Ovary (tissue), 10 donors: ENCODE measurements at regions of chr2 and their contacts with region 1.

Region 1: DNA sequence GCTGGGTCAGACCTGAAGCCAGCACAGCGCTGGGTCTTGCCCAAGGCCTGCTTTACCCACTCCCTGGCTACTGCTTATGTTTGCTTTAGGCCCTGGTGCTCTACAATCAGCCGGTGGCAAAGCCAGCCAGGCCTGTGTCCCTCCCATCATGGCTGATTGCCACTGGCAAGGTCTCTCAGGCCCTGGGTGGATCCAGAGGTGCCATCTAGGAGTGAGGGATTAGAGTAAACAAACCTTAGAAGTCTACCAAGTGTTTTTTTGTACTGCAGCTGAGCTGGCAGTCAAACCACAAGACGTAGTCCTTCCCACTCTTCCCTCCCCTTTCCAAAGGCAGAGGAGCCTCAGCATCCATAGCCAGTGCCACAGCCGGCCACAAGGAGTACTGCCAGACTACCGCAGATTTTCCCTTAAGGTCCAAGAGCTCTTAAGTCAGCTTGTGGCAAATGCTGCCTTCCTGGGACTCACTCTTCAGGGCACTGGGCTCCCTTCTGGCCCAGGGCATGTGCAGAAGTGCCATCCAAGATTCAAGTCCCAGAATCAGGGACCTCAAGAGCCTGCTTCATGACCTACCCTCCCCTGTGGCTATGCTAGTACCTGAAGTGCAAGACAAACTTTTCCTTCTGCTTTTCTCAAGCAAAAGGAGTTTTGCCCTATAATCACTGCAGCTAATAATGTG is 20.0 kb downstream of the IL1RL2 start:
- DNase-seq: no peak
- H3K4me3 ChIP-seq: no peak overlapping the region
- H3K27ac ChIP-seq: no peak overlapping the region
- H3K4me1 ChIP-seq: no peaks in the 10 kb centered on the region
- H3K27me3 ChIP-seq: no peaks in the 10 kb centered on the region
- CTCF ChIP-seq: no peak
- EP300 ChIP-seq: no peak
- POLR2A ChIP-seq: no peak

Region 2: GRCh38 chr2:100660851-100661584 is 1545.8 kb before region 1 on chr2:
- intact Hi-C with region 1: loop called in 1 of 4 experiments (anchors 10 kb)
- DNase-seq: no peak
- H3K4me3 ChIP-seq: no peak overlapping the region
- H3K27ac ChIP-seq: no peak overlapping the region
- H3K4me1 ChIP-seq: no peaks in the 10 kb centered on the region
- H3K27me3 ChIP-seq: no peaks in the 10 kb centered on the region
- CTCF ChIP-seq: no peak
- EP300 ChIP-seq: no peak
- POLR2A ChIP-seq: no peak